OCI-LY7 (cell line): ENCODE measurements at regions of chr2 and their contacts with region 1.

Region 1: DNA sequence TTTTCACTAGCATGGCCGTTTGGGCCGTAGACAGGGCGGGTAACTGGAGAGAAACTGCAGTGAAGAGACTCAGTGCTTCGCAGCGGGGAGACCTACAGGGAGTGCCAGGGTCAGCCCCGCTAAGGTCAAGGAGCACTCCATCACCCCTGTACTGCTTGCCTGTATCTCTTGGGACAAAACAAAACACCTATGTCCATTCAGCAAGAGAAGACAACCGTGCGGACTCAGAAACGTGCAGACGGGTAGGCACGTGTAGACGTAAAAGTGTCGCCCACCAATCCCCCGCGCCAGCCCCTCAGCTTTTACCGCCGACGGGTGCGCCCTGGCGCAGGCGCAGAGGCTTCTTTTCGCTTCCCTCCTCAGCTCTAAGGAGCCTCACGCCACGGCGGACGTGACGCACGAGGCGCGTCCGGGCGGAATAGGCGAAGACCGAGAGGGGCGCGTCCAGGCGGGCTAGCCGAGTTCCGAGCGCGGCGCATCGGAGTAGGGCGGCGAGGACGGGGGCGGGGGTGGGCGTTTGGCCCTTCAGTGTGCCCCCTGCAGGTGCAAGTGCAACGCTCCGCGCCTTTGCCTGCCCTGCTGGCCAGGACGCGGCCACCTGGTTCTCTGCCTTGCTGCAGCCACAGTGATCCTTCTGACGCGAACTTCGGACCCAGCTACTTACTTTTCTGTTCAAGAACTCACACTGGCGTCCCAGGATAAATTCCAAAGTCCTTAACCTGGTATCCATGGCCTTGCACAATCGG is 3.3 kb upstream of the SOS1 start:
- DNase-seq: peak; percentile 99
- H3K4me3 ChIP-seq: peak overlapping the region; percentile 73
- H3K27ac ChIP-seq: peak overlapping the region; percentile 87
- H3K4me1 ChIP-seq: peaks cover 61% of the 10 kb centered on the region
- CTCF ChIP-seq: peak; percentile 78

Region 2: DNA sequence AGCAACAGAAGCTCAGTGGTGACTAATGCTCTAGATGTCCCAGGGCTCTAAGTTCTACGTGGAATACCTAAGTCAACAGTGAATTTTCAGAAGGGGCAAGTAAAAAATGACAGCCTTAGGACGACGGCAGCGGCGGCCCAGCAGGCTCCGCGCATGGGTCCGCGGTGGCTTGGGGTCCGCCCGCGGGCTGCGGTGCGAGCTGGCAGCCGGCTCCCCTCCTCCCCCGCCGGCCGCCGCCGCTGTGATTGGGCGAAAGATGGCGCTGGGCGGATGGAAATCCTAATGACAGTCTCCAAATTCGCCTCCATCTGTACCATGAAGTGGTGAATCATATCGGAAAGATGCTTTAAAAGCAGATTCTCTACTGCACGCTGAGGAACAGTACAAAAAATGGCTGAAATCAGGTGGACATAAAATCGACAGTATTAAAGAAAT is 596.1 kb before region 1 on chr2:
- CTCF ChIA-PET with region 1: no interaction called
- POLR2A ChIA-PET with region 1: interaction called, 3 read pairs
- intact Hi-C with region 1: loop called (anchors 10 kb)
- DNase-seq: peak; percentile 72
- H3K4me3 ChIP-seq: peak overlapping the region; percentile 44
- H3K27ac ChIP-seq: peak overlapping the region; percentile 84
- H3K4me1 ChIP-seq: peaks cover 83% of the 10 kb centered on the region
- CTCF ChIP-seq: peak; percentile 47

Region 3: DNA sequence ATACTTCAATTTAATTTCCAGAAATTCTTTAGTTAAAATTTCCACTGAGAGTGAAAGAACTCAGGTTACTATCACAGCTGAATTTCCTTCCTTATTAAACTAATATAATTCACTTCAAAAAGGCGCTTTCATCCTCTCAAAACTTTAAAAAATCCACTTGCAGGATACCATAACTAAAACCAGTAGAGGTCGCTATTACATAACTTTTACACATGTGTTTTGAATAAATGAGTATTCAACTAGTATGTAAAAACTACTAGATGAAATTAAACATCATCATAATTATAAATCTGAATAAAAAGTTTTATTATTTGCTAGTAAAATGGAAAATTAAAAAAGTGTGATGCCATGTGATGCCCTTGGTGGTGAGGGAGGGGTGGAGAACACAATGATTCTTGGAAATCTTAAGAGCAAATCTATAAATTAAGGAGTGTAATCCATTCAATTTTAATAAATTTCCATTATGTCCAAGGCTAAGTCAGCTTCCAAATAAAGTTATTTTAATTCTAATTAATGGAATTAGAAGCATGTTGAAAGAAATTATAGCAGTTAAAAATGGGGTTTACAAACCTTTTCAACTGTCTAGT is 64.7 kb before region 1 on chr2:
- CTCF ChIA-PET with region 1: no interaction called
- POLR2A ChIA-PET with region 1: interaction called, 6 read pairs
- intact Hi-C with region 1: loop called (anchors 2 kb)
- DNase-seq: peak; percentile 77
- H3K4me3 ChIP-seq: no peak overlapping the region
- H3K27ac ChIP-seq: no peak overlapping the region
- H3K4me1 ChIP-seq: no peaks in the 10 kb centered on the region
- CTCF ChIP-seq: peak; percentile 100

Region 4: GRCh38 chr2:39107156-39107555 is 17.0 kb before region 1 on chr2:
- CTCF ChIA-PET with region 1: no interaction called
- POLR2A ChIA-PET with region 1: interaction called, 14 read pairs
- intact Hi-C with region 1: no loop called
- DNase-seq: peak; percentile 9
- H3K4me3 ChIP-seq: no peak overlapping the region
- H3K27ac ChIP-seq: no peak overlapping the region
- H3K4me1 ChIP-seq: peaks cover 38% of the 10 kb centered on the region
- CTCF ChIP-seq: no peak

Region 5: GRCh38 chr2:39338502-39338901 is 214.3 kb after region 1 on chr2:
- CTCF ChIA-PET with region 1: no interaction called
- POLR2A ChIA-PET with region 1: no interaction called
- intact Hi-C with region 1: no loop called
- DNase-seq: no peak
- H3K4me3 ChIP-seq: no peak overlapping the region
- H3K27ac ChIP-seq: no peak overlapping the region
- H3K4me1 ChIP-seq: no peaks in the 10 kb centered on the region
- CTCF ChIP-seq: no peak

Region 6: DNA sequence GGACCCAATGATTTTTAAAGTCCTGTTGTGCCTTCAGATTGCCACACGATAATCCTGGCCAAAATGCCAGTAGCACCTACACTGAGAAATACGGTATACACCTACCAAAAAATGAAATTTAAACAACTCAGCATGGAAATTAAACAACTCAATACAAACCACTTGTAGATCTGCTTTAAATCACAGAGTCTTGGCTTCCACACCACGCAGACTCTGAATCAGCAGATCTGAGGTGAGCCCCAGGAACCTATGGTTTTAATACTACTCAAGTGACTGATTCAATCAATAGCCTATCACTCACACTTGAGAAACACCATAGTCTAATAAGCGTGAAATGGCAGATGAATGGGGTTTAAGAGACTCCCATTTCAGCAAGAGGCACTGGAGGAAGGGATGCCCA is 266.0 kb after region 1 on chr2:
- CTCF ChIA-PET with region 1: no interaction called
- POLR2A ChIA-PET with region 1: no interaction called
- intact Hi-C with region 1: no loop called
- DNase-seq: no peak
- H3K4me3 ChIP-seq: no peak overlapping the region
- H3K27ac ChIP-seq: no peak overlapping the region
- H3K4me1 ChIP-seq: no peaks in the 10 kb centered on the region
- CTCF ChIP-seq: no peak

Region 7: DNA sequence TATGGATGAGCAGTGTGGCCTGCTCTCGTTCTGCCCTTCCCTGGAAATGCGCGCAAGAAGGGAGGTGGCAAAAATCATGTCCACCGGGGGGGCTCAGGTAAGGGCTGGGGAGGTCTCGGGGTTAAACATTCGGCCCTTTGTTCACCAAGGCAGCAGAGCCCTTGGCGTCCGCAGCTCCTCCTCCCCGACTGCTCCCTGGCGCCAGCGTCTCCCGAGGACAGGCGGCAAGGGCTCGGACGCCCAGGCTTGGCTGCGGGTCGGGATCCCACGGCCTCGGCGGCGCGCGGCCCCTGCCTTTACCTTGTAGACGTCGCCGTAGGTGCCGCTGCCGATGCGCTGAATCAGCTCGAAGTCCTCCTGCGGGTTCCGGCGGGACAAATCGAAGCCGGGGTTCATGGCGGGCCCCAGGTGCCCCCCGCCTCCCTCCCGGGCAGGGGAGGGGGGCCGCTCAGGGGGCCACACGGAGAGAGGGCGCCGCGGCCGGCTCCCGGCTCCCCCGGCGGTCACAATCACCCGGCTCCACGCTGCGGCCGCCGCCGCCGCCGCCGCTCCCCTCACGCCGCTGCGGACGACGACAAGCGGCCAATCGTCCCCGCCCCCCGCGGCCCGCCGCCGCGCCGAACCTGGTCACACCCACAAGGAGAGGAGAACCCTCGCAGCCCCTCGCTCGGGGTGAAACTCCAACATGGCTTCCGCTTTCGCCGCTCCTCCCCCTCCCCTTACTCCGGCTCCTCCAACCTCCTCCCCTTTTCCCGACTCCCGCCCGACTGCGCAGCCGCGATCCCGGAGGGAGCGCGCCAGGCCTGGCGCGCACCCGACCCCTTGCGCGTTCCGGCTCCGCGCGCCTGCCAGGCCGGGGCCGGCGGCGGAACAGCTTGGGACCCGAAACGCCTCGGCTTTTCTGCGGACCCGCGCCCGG is 312.7 kb after region 1 on chr2 and contains the start of gene MAP4K3:
- CTCF ChIA-PET with region 1: no interaction called
- POLR2A ChIA-PET with region 1: no interaction called
- intact Hi-C with region 1: loop called (anchors 5 kb)
- DNase-seq: peak; percentile 87
- H3K4me3 ChIP-seq: peak within 1 kb of the TSS; percentile 87
- H3K27ac ChIP-seq: peak within 1 kb of the TSS; percentile 61
- H3K4me1 ChIP-seq: peaks cover 32% of the 10 kb centered on the region
- CTCF ChIP-seq: no peak
- total RNA-seq, gene MAP4K3: 10.7 and 12.4 TPM in 2 replicates